Activated CD4-positive, alpha-beta T cell treated with anti-CD3 and anti-CD28 coated beads, Interleukin-2, amount 10 ng/mL, durations not matched to agents 7 days and 5 days (primary cell): ENCODE measurements at regions of chr17 and their contacts with region 1.

Region 1: DNA sequence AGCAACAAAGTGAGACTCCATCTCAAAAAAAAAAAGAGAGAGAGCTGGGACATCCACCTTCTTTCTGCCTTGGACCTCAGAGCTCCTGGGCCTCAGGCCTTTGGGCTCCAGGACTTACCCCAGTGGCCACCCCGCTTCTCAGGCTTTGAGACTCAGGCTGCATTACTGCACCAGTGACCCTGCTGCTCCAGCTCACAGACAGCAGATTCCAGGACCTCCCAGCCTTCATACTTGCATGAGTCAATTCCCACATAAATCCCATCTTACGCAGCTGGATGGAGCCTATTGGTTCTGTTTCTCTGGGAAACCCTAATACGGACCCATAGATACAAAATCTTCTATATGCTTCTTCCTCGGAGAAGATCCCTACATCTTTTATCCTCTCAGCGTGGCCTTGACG is 2.1 kb upstream of the CEP295NL start:
- DNase-seq: no peak
- H3K4me3 Mint-ChIP-seq: no peak overlapping the region
- H3K27ac Mint-ChIP-seq: no peak overlapping the region
- H3K4me1 Mint-ChIP-seq: peaks cover 10% of the 10 kb centered on the region
- H3K27me3 Mint-ChIP-seq: no peaks in the 10 kb centered on the region

Region 2: GRCh38 chr17:78915872-78916632 is 10.9 kb after region 1 on chr17:
- CTCF ChIA-PET with region 1: interaction called, 10 read pairs
- POLR2A ChIA-PET with region 1: no interaction called
- DNase-seq: no peak
- H3K4me3 Mint-ChIP-seq: peak overlapping the region; percentile 38
- H3K27ac Mint-ChIP-seq: peak overlapping the region; percentile 81
- H3K4me1 Mint-ChIP-seq: peaks cover 11% of the 10 kb centered on the region
- H3K27me3 Mint-ChIP-seq: no peaks in the 10 kb centered on the region